Activated T-helper 1 cell treated with anti-CD3 and anti-CD28 coated beads, Interleukin-12 subunit alpha, Interleukin-12 subunit beta, Interleukin-2, Interleukin-4 antibody, amounts not matched to agents 30 ng/mL and 10 ng/mL and 1 ng/mL, durations not matched to agents 14 hours and 24 hours and 36 hours (primary cell): ENCODE measurements at regions of chr2 and their contacts with region 1.

Region 1: DNA sequence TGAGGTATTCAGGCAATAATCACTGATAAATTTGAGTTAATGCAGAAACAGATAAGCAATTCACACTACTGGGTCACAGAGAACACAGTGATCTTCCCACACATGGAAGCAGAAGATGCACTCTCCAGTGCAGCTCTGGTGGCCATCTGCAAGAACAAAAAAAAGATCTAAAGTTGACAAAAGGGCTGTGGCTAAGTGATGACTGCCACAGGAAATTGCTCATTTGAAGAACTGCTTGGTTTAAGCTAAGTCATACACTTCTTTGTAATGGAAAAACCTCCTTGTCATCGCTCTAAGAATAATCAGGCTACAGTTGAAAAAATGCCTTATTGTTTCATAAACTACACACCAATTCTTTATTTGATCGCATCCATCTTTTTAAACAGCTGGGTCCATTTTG is 115.1 kb downstream of the DTNB start:
- DNase-seq: peak; percentile 53
- H3K4me3 Mint-ChIP-seq: peak overlapping the region; percentile 46
- H3K27ac Mint-ChIP-seq: peak overlapping the region; percentile 98
- H3K4me1 Mint-ChIP-seq: peaks cover 63% of the 10 kb centered on the region
- H3K27me3 Mint-ChIP-seq: no peaks in the 10 kb centered on the region

Region 2: GRCh38 chr2:25362049-25362433 is 196.2 kb before region 1 on chr2:
- intact Hi-C with region 1: loop called (anchors 1 kb)
- DNase-seq: peak; percentile 93
- H3K4me3 Mint-ChIP-seq: peak overlapping the region; percentile 84
- H3K27ac Mint-ChIP-seq: peak overlapping the region; percentile 94
- H3K4me1 Mint-ChIP-seq: peaks cover 26% of the 10 kb centered on the region
- H3K27me3 Mint-ChIP-seq: peaks cover 2% of the 10 kb centered on the region

Region 3: DNA sequence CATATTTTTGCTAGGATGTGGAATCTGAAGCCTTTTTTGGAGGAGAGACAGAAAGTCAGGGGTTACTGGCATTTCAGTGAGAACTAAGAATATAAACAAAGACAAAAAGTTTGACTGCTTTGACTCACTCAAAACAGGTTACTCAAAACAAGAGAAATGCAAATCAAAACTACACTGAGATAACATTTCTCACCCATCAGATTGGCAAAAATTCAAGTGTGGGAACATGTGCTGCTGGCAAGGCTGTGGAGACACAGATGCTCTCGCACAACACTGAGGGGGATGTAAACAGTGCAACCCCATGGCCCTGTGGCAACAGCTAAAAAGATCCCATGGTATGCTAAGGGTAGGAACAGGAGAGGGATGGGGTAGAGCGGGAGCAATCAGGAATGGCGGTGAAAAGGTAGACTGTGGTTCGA is 28.5 kb after region 1 on chr2:
- intact Hi-C with region 1: loop called (anchors 1 kb)
- DNase-seq: no peak
- H3K4me3 Mint-ChIP-seq: peak overlapping the region; percentile 71
- H3K27ac Mint-ChIP-seq: peak overlapping the region; percentile 92
- H3K4me1 Mint-ChIP-seq: peaks cover 27% of the 10 kb centered on the region
- H3K27me3 Mint-ChIP-seq: no peaks in the 10 kb centered on the region

Region 4: GRCh38 chr2:25592766-25593292 is 34.6 kb after region 1 on chr2:
- intact Hi-C with region 1: loop called (anchors 1 kb)
- DNase-seq: no peak
- H3K4me3 Mint-ChIP-seq: no peak overlapping the region
- H3K27ac Mint-ChIP-seq: no peak overlapping the region
- H3K4me1 Mint-ChIP-seq: peaks cover 44% of the 10 kb centered on the region
- H3K27me3 Mint-ChIP-seq: no peaks in the 10 kb centered on the region

Region 5: DNA sequence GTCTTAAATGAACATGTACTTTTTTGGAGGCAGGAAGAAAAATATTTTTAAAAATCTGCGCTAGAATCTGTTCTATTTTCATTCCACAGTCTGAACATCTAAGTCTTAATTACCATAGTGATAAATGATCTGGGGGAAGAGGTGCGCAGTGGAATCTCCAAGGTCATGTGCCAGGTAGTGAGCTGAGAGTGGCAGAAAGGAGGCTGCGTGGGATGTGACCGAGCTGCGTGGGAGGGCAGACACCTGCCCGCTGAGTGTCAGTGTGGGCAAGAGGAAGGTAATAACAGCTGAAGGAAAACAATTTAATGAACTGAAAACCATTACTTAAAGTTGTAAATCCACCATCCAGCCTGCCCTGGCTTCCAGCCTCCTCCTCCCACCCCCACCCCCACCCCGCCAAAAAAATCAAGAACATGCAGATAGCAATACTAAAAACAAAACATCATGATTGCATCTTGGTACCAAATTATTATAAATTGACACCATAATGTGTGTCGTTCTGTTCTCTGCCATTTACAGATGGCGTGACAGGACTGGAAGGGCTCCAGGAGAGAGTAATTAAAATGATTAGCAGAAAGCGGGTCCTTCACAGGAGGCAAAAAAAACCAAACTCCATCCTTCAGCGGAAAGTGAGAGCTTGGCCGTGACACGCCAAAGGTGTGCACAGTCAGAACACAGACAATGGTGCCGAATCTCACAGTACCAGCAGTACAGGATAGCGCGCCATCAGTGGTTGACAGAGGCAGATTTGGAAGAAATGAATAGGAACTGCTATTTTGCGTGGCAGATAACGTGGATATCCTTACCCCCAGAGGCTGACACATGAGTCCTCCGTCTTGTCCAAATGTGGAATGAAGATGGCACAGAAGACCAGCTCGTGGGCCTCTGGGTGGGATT is 126.6 kb after region 1 on chr2:
- intact Hi-C with region 1: no loop called
- DNase-seq: no peak
- H3K4me3 Mint-ChIP-seq: no peak overlapping the region
- H3K27ac Mint-ChIP-seq: no peak overlapping the region
- H3K4me1 Mint-ChIP-seq: no peaks in the 10 kb centered on the region
- H3K27me3 Mint-ChIP-seq: peaks cover 8% of the 10 kb centered on the region

Region 6: DNA sequence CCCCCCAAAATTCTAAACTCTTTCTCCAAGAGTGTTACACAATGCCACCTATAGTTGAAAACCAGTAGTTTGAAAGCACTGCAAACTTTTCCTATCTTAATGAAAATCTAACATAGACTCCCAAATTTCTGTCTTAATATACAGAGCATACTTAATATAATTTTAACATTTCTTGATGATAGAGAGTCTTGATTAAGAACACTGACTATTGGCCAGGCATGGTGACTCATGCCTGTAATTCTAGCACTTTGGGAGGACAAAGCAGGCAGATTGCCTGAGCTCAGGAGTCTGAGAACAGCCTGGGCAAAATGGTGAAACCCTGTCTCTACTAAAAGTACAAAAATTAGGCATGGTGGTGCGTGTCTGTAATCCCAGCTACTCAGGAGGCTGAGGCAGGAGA is 285.8 kb after region 1 on chr2:
- intact Hi-C with region 1: no loop called
- DNase-seq: no peak
- H3K4me3 Mint-ChIP-seq: no peak overlapping the region
- H3K27ac Mint-ChIP-seq: no peak overlapping the region
- H3K4me1 Mint-ChIP-seq: peaks cover 4% of the 10 kb centered on the region
- H3K27me3 Mint-ChIP-seq: no peaks in the 10 kb centered on the region